Endothelial cell of umbilical vein (primary cell): ENCODE measurements at regions of chr16 and their contacts with region 1.

Region 1: DNA sequence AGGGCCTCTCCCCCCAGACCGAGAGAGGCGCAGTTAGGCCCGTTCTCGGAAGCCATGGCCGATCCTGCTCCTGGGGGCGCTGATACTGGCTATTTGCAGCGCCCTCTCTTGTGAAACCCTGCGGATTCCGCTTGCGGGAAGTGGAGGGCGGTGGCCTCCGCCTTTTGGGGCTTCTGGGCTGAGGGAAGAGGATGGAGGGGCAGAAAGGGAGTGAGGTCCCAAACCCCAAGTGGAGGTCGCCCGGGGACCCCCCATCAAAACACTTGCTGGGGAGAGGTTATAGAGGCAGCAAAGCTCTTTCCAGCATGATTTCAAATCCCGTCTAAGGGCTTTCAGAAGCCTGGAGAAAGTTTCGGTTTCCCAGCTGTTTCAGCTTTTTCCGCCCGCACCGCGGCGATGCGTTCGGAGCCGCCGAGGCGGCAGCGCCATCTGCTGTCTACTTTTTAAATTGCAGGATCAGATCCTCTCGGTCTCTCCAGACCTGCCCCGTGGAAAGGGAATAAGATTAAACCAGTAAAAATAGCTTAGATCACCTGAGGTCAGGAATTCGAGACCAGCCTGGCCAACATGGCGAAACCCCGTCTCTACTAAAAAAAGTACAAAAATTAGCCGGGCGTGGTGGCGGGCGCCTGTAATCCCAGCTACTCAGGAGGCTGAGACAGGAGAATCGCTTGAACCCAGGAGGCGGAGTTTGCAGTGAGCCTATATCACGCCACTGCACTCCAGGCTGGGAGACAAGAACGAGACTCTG is 15.8 kb downstream of the SNX20 start:
- DNase-seq: peak; percentile 77
- H3K4me3 ChIP-seq: peak overlapping the region; percentile 42 to 76 (median 72)
- H3K27ac ChIP-seq: no peak overlapping the region
- H3K4me1 ChIP-seq: peaks cover 3% of the 10 kb centered on the region
- H3K27me3 ChIP-seq: no peaks in the 10 kb centered on the region
- CTCF ChIP-seq: peak; percentile 77 to 80
- POLR2A ChIP-seq: no peak

Region 2: GRCh38 chr16:50065624-50066481 is 599.5 kb before region 1 on chr16 and contains the start of gene HEATR3:
- CTCF ChIA-PET with region 1: interaction called, 5 read pairs
- POLR2A ChIA-PET with region 1: no interaction called
- dilution Hi-C with region 1: no loop called
- intact Hi-C with region 1: loop called (anchors 1 kb)
- DNase-seq: peak; percentile 95
- H3K4me3 ChIP-seq: peak within 1 kb of the TSS; percentile 76 to 82 (median 76)
- H3K27ac ChIP-seq: peak within 1 kb of the TSS; percentile 67
- H3K4me1 ChIP-seq: peaks cover 27% of the 10 kb centered on the region
- H3K27me3 ChIP-seq: no peaks in the 10 kb centered on the region
- CTCF ChIP-seq: no peak
- POLR2A ChIP-seq: peak; percentile 39
- total RNA-seq, gene HEATR3: 17.0 and 23.1 TPM in 2 replicates

Region 3: DNA sequence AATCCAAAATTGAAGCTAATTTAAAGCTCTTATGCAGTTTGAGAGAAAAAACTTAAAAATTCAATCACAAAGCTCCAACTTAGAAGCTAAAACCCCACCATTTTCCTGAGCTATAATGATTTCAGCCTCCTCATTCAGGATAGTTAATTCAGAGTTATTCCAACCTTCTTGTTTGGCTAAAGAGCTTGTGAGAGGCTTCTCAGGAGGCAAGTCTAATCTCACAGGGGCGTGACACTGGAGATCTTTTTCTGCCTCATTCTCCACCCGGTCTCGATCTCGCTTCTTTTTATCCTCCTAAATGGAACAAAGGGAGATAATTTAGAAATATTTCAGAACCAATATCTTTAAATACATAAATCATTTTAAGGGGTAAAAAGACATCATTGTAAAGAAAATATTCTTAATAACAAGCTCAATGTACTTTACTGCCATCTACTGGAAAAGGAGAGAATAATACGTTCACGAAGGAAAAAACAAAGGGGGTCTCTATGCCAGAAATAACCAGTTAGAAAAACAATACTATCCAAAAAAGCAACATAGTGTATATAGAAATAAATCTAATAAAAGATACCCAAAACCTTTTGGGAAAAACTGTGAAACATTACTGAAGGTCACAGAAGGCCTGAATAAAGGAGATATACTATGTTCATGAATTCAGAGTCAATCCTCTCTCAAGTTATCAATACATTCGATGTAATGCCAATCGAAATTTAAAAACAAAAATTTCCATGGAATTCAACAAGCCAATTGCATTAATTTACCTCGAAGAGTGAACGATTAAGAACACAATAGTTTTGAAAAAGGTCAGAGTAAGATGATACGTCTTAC is 310.5 kb before region 1 on chr16:
- CTCF ChIA-PET with region 1: interaction called, 15 read pairs
- POLR2A ChIA-PET with region 1: no interaction called
- dilution Hi-C with region 1: no loop called
- intact Hi-C with region 1: no loop called
- DNase-seq: peak; percentile 33
- H3K4me3 ChIP-seq: no peak overlapping the region
- H3K27ac ChIP-seq: no peak overlapping the region
- H3K4me1 ChIP-seq: no peaks in the 10 kb centered on the region
- H3K27me3 ChIP-seq: no peaks in the 10 kb centered on the region
- CTCF ChIP-seq: peak; percentile 25 to 37
- POLR2A ChIP-seq: no peak

Region 4: GRCh38 chr16:50548125-50548908 is 117.0 kb before region 1 on chr16 and contains the start of gene NKD1:
- CTCF ChIA-PET with region 1: interaction called, 10 read pairs
- POLR2A ChIA-PET with region 1: no interaction called
- dilution Hi-C with region 1: no loop called
- intact Hi-C with region 1: loop called (anchors 2 kb)
- DNase-seq: peak; percentile 26
- H3K4me3 ChIP-seq: peak within 1 kb of the TSS; percentile 47 to 52 (median 48)
- H3K27ac ChIP-seq: no peak within 1 kb of the TSS
- H3K4me1 ChIP-seq: peaks cover 4% of the 10 kb centered on the region
- H3K27me3 ChIP-seq: peaks cover 37% of the 10 kb centered on the region in 2 experiments
- CTCF ChIP-seq: no peak
- POLR2A ChIP-seq: no peak
- total RNA-seq, gene NKD1: 0.32 TPM in 1 of 2 replicates, not detected in the other

Region 5: GRCh38 chr16:50653633-50654519 is 11.4 kb before region 1 on chr16:
- CTCF ChIA-PET with region 1: interaction called, 14 read pairs
- POLR2A ChIA-PET with region 1: no interaction called
- dilution Hi-C with region 1: no loop called
- intact Hi-C with region 1: no loop called
- DNase-seq: no peak
- H3K4me3 ChIP-seq: no peak overlapping the region
- H3K27ac ChIP-seq: no peak overlapping the region
- H3K4me1 ChIP-seq: no peaks in the 10 kb centered on the region
- H3K27me3 ChIP-seq: no peaks in the 10 kb centered on the region
- CTCF ChIP-seq: no peak
- POLR2A ChIP-seq: no peak

Region 6: GRCh38 chr16:50741808-50742575 is 76.7 kb after region 1 on chr16 and contains the start of gene CYLD:
- CTCF ChIA-PET with region 1: interaction called, 15 read pairs
- POLR2A ChIA-PET with region 1: no interaction called
- dilution Hi-C with region 1: no loop called
- intact Hi-C with region 1: loop called (anchors 1 kb)
- DNase-seq: peak; percentile 100
- H3K4me3 ChIP-seq: peak within 1 kb of the TSS; percentile 63 to 92 (median 79)
- H3K27ac ChIP-seq: peak within 1 kb of the TSS; percentile 62
- H3K4me1 ChIP-seq: peaks cover 11% of the 10 kb centered on the region
- H3K27me3 ChIP-seq: peaks cover 2 to 3% of the 10 kb centered on the region in 2 experiments
- CTCF ChIP-seq: no peak
- POLR2A ChIP-seq: no peak
- total RNA-seq, gene CYLD: 21.5 and 22.2 TPM in 2 replicates